ENCODE measurements at regions of chr7 and their contacts with region 1.

Region 1: DNA sequence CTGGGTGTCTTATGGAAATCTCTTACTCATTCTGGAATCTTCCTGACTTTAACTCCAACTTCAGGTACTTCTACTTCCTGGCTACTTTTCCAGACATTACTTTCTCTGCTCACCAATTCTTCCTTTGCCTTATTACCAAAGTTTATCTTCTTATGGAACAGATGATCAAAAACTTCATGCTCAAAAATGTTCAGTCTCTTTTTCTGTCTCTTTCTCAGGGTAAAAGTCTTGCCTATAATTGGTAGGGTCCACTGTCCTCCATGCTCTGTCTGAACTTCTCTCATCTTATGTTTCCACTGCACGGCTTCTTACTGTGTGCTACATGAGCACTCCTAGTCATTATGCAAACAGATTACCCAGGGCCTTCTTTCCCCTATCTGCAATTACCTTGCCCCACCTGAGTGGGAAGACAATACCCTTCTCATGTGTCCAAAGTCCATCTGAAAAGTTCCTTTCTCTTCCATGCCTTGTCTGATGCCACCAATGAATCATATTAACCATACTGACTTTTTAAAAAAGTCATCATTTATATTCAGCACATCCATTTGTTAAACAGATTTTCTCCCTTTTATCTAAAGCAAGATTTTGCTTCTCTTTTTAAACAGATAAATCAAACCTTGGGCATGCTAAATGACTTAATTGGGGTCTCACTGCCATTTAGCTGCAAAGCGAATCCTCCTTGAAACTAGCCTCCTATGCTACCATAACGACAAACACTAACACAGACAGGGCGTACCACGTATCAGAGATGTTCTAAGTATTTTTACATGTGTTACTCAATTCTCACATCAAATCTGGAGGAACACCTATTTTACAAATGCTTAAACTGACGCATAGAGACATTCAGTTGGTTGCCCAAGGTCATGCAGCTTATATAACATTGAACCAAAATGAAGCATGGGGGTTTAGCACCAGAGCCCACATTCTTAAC is 48.8 kb downstream of the SEMA3C start:
- DNase-seq: no peak
- H3K4me3 ChIP-seq: no peak overlapping the region
- H3K27ac ChIP-seq: peak overlapping the region; percentile 39
- H3K4me1 ChIP-seq: peaks cover 11% of the 10 kb centered on the region
- H3K27me3 ChIP-seq: no peaks in the 10 kb centered on the region
- CTCF ChIP-seq: no peak

Region 2: GRCh38 chr7:80859272-80859970 is 10.7 kb before region 1 on chr7:
- CTCF ChIA-PET with region 1: no interaction called
- dilution Hi-C with region 1: no loop called
- in situ Hi-C with region 1: no loop called
- intact Hi-C with region 1: loop called (anchors 1 kb)
- DNase-seq: no peak
- H3K4me3 ChIP-seq: no peak overlapping the region
- H3K27ac ChIP-seq: no peak overlapping the region
- H3K4me1 ChIP-seq: peaks cover 14% of the 10 kb centered on the region
- H3K27me3 ChIP-seq: no peaks in the 10 kb centered on the region
- CTCF ChIP-seq: no peak

Region 3: GRCh38 chr7:81013083-81013817 is 143.2 kb after region 1 on chr7:
- CTCF ChIA-PET with region 1: no interaction called
- dilution Hi-C with region 1: no loop called
- in situ Hi-C with region 1: no loop called
- intact Hi-C with region 1: no loop called
- DNase-seq: peak; percentile 92
- H3K4me3 ChIP-seq: no peak overlapping the region
- H3K27ac ChIP-seq: peak overlapping the region; percentile 82
- H3K4me1 ChIP-seq: peaks cover 17% of the 10 kb centered on the region
- H3K27me3 ChIP-seq: no peaks in the 10 kb centered on the region
- CTCF ChIP-seq: no peak